ENCODE measurements at regions of chr2 and their contacts with region 1.

Region 1: DNA sequence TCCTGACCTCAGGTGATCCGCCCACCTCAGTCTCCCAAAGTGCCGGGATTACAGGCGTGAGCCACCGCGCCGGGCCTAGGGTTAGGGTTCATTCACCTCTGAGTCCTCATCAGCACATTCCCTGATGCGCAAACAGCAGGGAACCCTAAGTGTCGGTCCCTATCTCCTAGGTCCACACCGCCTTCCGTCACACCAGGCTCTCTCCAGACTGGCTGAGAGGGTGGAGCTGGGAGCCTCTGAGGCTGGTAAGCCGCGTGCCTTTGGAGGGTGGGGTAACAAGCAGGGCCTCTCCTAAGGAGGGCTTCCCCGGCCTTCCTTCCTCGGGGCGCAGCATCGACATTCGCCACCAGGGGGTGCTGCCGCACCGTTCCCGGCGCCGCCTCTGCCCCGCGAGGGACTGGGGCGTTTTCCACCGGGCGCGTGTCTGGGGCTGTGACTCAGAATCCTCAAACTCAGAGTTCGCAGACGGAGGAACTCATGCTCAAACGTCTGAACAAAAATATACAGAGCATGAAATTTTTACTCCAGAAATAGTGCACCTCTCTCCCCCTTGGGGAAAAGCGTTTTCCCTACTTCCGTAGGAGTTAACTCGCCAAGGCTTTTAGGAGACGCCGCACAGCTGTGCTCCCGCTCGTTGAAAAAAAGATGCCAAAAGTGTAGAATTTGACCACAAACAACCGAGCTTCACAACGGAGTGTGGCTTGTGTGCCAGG is 63.9 kb upstream of the ASAP2 start:
- DNase-seq: peak; percentile 88 to 95 (median 90)
- ATAC-seq: peak; percentile 95
- H3K4me3 ChIP-seq: no peak overlapping the region
- H3K4me1 ChIP-seq: peaks cover 10% of the 10 kb centered on the region
- CTCF ChIP-seq: peak; percentile 95

Region 2: DNA sequence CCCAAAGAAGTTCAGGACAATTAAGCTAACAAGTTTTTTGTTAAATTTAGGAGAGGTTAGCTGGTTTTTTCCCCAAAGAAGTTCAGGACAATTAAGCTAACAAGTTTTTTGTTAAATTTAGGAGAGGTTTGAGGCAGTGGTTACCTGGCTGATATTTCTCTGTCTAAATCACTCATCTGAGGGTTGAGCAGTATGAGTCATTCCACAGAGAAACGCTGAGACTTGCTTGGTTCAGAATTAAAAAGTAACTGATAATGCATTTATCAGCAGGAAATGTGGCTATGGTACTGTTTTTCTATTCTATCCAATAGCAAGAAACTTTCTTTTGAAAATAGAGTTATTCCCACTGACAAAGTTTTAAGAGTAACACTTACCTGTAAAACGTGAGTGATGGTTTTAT is 282.5 kb before region 1 on chr2:
- intact Hi-C with region 1: loop called in 1 of 2 experiments (anchors 10 kb)
- DNase-seq: no peak
- ATAC-seq: no peak
- H3K4me3 ChIP-seq: no peak overlapping the region
- H3K4me1 ChIP-seq: no peaks in the 10 kb centered on the region
- CTCF ChIP-seq: no peak

Region 3: GRCh38 chr2:8872821-8873432 is 269.8 kb before region 1 on chr2:
- intact Hi-C with region 1: loop called (anchors 5 to 10 kb)
- DNase-seq: peak in 1 of 3 donors; percentile 34
- ATAC-seq: peak; percentile 74
- H3K4me3 ChIP-seq: no peak overlapping the region
- H3K4me1 ChIP-seq: no peaks in the 10 kb centered on the region
- CTCF ChIP-seq: peak; percentile 28

Region 4: GRCh38 chr2:9003616-9004337 is 138.9 kb before region 1 on chr2 and contains the start of gene MBOAT2:
- intact Hi-C with region 1: loop called in 1 of 2 experiments (anchors 5 kb)
- DNase-seq: peak; percentile 89 to 94 (median 89)
- ATAC-seq: peak; percentile 92
- H3K4me3 ChIP-seq: peak within 1 kb of the TSS; percentile 63
- H3K4me1 ChIP-seq: peaks cover 16% of the 10 kb centered on the region
- CTCF ChIP-seq: no peak
- total RNA-seq, gene MBOAT2: 36.1 to 65.6 (median 50.6) TPM

Region 5: DNA sequence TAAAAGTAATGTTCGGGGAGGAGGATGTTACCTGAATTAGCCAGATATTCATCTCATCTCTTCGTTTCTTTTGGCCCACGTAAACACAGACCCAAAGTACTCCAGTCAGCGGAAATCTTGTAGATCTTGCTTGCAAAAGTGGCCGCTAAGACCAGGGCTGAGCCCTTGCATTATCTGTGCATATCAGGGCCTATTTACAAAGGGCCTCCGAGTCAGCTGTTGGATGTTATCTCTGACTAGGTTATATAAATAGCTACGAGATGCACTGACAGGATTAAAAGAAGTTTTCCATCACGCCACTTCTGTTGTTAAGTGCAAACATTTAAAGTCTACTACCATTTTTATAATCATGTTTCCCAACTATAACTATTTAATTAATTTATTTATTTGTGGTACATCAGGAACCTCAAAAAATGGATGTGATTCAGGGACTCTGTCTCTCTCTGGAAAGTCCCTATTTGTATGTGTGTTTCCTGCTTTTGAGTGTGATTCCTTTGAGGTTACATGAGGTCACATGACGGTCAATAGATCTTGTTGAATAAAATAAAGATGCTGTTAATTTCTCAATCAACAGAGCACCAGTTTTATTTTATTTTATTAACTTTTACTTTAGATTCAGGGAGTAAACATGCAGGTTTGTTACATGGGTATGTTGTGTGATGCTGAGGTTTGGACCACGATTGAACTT is 92.4 kb before region 1 on chr2:
- intact Hi-C with region 1: no loop called
- DNase-seq: no peak
- ATAC-seq: no peak
- H3K4me3 ChIP-seq: no peak overlapping the region
- H3K4me1 ChIP-seq: no peaks in the 10 kb centered on the region
- CTCF ChIP-seq: no peak

Region 6: GRCh38 chr2:9333591-9334171 is 191.0 kb after region 1 on chr2:
- intact Hi-C with region 1: loop called in 1 of 2 experiments (anchors 5 kb)
- DNase-seq: peak in 2 of 3 donors; percentile 65 to 72
- ATAC-seq: peak; percentile 64
- H3K4me3 ChIP-seq: no peak overlapping the region
- H3K4me1 ChIP-seq: peaks cover 32% of the 10 kb centered on the region
- CTCF ChIP-seq: no peak

Measured in mucosa of descending colon (tissue), 3 donors.